RWPE1 (cell line): ENCODE measurements at regions of chr5 and their contacts with region 1.

Region 1: DNA sequence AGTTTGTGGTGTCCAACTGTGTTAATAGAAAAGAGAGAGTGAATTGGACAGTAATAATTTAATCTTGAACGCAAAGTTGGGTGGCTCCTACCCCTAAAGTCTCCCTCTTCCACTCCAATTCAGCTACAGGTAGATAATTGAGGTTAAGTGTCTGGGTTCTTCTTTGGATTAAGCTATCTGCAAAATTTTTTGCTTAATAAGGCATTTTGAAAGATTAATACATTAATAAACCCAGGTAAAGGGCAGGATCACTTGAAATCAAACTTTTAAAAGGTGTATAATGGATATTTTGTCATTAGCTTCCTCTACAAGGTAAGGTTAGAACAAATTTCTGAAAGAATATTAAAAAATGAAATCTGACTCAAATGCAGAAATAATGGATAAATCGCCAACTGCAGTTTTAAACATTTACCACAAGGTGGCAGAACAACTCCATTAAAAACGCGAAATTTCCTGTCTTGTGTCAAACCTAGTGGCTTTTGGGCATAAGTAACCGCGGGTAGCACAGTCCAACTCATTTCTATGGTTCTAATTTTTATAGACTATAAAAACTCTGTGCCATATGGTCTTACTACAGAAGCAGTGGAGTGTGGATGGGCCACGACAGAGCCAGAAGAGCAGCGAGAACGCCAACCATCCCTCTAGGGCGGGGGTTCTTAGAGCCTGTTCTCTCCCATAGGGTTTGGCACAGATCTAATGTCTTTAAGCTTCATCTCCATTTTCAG is 276.5 kb downstream of the ARHGEF28 start:
- DNase-seq: peak; percentile 58
- H3K27ac ChIP-seq: no peak overlapping the region
- CTCF ChIP-seq: peak; percentile 88

Region 2: DNA sequence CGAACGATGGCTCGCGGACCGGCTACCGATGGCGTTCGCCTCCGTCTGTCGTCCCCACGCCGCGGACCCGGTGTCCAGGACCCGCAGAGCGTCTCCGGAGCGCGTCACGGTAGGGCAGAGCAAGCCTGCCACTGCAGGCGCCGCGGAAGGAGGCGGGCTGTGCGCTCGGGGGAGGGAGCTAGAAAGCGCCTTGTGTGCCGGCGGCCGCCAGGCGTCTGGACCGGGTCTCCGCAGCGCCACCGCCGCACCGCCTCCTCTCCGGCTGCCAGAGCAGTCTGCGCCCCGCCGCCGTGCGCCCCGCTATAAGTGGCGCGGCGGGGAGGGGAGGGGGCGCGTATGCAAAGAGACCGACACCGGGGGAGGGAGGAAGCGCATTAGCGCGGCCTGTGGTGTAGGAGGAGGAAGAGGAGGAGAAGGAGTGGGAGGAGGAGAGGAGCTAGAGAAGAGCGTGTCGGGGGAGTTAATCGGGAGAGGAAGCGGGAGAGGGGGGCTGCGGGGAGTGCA is 738.0 kb after region 1 on chr5 and contains the start of gene ENC1:
- CTCF ChIA-PET with region 1: interaction called, 16 read pairs
- POLR2A ChIA-PET with region 1: interaction called, 3 read pairs
- DNase-seq: peak; percentile 68
- H3K27ac ChIP-seq: peak within 1 kb of the TSS; percentile 97
- CTCF ChIP-seq: peak; percentile 67